ENCODE measurements at regions of chr5 and their contacts with region 1.

Region 1: GRCh38 chr5:160199410-160199911 is 29.8 kb upstream of the FABP6 start:
- DNase-seq: peak; percentile 75
- H3K4me3 ChIP-seq: peak overlapping the region; percentile 24
- H3K27ac ChIP-seq: no peak overlapping the region
- H3K4me1 ChIP-seq: peaks cover 6% of the 10 kb centered on the region
- H3K27me3 ChIP-seq: no peaks in the 10 kb centered on the region
- CTCF ChIP-seq: peak; percentile 96

Region 2: DNA sequence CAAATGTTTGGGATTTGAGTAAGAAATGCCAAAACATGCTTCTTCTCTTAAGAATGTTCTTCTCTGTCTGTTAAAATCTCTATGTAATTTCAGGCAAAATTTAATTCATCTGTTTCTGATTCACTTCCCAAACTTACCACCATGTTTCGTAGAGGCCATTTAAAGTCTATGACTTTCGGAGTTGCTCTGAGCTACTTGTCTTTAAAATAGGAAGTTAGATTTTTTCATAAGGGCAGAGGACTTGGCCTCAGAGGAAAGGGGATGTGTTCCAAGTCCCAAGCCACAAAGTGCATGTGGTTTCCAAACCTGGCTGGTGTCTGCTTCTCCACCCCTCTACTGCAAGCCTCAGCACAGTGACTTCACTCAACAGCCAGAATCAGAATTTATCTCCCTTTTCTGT is 394.4 kb before region 1 on chr5:
- intact Hi-C with region 1: no loop called
- DNase-seq: peak; percentile 27
- H3K4me3 ChIP-seq: no peak overlapping the region
- H3K27ac ChIP-seq: no peak overlapping the region
- H3K4me1 ChIP-seq: no peaks in the 10 kb centered on the region
- H3K27me3 ChIP-seq: no peaks in the 10 kb centered on the region
- CTCF ChIP-seq: no peak

Region 3: GRCh38 chr5:159975462-159976019 is 223.9 kb before region 1 on chr5:
- intact Hi-C with region 1: no loop called
- DNase-seq: peak; percentile 22
- H3K4me3 ChIP-seq: no peak overlapping the region
- H3K27ac ChIP-seq: no peak overlapping the region
- H3K4me1 ChIP-seq: no peaks in the 10 kb centered on the region
- H3K27me3 ChIP-seq: peaks cover 20% of the 10 kb centered on the region
- CTCF ChIP-seq: no peak

Region 4: DNA sequence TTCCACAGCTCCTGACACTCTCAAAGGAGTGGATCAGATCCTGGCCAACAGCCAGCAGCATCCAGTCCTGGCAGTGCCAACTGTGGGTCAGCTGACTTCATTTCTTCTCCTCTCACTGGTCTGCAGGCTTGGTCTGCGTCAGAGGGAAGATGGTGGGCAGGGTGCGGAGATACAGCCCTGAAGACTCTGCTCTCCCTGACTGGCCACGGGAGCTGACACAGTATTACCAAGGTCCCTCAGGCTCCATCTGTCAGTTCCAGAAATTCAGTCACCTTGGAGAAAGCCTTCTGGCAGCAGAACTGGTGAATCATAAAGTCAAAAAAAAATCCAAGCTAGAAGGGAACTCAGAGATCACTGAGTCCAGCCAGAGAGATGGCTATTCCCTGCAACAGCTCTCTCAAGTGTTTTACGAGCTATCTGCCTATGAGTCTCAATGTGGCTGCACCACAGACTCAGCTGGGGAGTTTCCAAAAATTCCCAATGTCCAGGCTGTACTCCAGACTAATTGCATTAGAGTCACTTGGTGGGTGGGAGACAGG is 143.0 kb after region 1 on chr5:
- intact Hi-C with region 1: loop called (anchors 2 kb)
- DNase-seq: no peak
- H3K4me3 ChIP-seq: no peak overlapping the region
- H3K27ac ChIP-seq: no peak overlapping the region
- H3K4me1 ChIP-seq: no peaks in the 10 kb centered on the region
- H3K27me3 ChIP-seq: no peaks in the 10 kb centered on the region
- CTCF ChIP-seq: no peak

Region 5: DNA sequence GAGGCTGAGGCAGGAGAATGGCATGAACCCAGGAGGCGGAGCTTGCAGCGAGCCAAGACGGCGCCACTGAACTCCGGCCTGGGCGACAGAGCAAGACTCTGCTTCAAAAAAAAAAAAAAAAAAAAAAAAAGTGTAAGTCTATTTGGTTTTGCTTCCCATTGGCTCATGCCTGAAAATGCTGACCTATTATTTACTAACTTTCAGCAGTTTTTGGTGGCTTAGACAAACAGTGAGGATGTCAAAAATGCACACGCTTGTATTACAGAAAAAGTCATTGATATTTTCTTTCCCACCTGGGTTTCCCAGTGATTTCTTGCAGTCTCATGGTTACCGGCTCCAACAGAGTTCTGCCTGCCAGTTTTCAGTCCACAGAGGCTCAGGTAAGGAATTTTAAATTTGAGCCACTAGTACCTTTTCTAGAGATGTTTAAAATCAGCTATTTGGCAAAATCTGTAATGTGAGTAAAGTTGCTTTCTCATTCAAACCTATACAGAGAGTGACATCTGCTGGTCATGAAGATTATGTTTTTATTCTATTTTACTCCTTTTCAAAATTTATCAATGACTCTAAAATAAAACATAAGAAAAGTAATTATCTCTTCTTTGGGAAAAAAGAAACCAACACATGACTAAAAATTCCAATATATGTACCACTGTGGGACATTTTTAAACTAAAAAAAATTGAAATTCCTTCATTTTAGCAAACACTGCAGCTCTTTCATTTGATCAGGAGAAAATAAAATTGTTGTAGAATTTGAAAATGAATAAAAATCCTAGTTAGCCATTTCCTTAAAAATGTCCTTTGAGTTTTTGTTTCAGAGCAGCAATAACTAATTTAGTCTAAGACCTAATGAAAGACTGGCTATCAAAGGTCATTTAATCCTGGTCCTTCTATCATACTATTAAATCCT is 191.6 kb after region 1 on chr5:
- intact Hi-C with region 1: loop called (anchors 2 kb)
- DNase-seq: no peak
- H3K4me3 ChIP-seq: no peak overlapping the region
- H3K27ac ChIP-seq: no peak overlapping the region
- H3K4me1 ChIP-seq: no peaks in the 10 kb centered on the region
- H3K27me3 ChIP-seq: no peaks in the 10 kb centered on the region
- CTCF ChIP-seq: peak; percentile 39